AG04450 (cell line): ENCODE measurements at regions of chr10 and their contacts with region 1.

Region 1: GRCh38 chr10:62437696-62438095 is 63.5 kb downstream of the ZNF365 start:
- DNase-seq: no peak
- H3K4me3 ChIP-seq: no peak overlapping the region
- H3K27ac ChIP-seq: no peak overlapping the region
- H3K27me3 ChIP-seq: no peaks in the 10 kb centered on the region
- CTCF ChIP-seq: peak; percentile 76

Region 2: DNA sequence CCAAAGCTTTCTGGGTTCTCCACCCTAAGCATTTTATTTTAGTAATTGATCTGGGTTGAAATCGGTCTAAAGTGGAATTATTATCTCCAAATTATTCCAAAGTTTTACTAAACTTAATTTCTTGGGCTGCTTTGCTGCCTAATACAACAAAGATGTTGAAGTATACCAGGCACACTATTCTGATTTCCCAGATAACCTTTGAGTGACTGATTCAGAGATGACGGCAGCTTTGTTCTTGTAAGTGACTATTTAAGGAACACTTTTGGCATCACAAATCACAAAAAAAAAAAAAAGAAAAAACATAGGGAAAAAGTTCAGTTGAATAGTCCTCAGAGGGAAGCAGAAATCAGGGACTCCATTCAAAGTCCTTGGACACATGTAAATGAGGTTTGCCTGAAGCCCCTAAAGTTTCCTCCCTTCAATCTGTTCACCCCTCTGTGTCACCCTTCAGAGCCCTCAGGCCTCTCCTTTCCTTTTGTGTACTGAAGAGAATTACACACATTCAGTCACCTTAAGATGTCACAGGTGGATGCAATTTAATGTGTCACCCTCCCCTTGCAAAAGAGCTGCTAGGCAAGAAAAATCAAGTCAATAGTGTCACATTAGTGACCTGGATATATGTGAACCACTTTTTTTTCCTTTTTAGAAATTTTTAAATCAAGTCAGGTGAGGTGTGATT is 250.6 kb before region 1 on chr10:
- CTCF ChIA-PET with region 1: no interaction called
- POLR2A ChIA-PET with region 1: no interaction called
- DNase-seq: no peak
- H3K4me3 ChIP-seq: no peak overlapping the region
- H3K27ac ChIP-seq: no peak overlapping the region
- H3K27me3 ChIP-seq: no peaks in the 10 kb centered on the region
- CTCF ChIP-seq: no peak

Region 3: DNA sequence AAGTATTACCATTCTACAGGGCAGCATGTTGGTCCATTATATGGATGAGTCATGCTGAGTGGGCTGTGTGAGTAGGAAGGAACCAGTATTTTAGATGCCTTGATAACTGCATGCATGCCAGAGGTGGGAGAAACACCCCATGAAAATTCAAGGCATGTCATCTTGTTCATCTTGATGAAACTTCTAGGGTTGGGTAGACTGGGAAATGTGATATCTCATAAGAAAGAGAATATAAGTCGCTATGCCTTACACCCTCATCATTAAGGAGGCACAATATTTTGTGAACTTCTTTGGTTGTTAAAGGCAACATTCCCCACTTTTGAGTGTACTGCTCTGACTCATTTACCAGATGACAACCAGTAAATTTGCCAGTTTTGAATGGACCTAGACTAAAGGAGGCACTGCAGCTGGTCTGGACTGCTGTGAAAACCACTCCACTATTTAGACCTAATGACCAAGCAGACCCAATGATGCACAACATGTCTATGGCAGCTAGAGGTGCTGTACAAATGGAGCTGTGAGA is 15.6 kb before region 1 on chr10:
- CTCF ChIA-PET with region 1: interaction called, 32 read pairs
- POLR2A ChIA-PET with region 1: interaction called, 4 read pairs
- DNase-seq: peak; percentile 58
- H3K4me3 ChIP-seq: no peak overlapping the region
- H3K27ac ChIP-seq: no peak overlapping the region
- H3K27me3 ChIP-seq: no peaks in the 10 kb centered on the region
- CTCF ChIP-seq: peak; percentile 28; the same call in 1 of the 2 replicates

Region 4: DNA sequence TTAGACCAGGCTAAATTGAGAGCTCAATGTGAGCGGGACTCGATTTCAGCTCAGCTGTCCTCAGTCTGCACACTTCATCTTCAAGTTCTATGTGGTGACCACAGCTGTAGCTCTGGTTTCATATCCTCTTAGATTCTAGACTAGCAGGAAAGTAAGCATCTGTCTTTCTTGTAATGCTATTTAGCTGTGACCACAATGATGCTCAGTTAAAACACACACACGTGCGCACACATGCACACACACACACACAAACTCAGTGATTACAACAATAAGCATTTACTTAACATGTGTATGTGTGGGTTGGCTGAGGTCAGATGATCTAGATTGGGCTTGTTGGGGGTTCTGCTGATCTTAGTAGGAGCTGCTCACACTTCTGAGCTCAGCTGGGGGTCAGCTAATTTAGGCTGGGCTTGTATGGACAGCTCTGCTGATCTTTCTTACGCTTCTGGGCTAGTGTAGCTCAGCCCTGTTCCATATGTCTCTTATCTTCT is 19.0 kb after region 1 on chr10:
- CTCF ChIA-PET with region 1: interaction called, 48 read pairs
- POLR2A ChIA-PET with region 1: no interaction called
- DNase-seq: no peak
- H3K4me3 ChIP-seq: no peak overlapping the region
- H3K27ac ChIP-seq: no peak overlapping the region
- H3K27me3 ChIP-seq: no peaks in the 10 kb centered on the region
- CTCF ChIP-seq: no peak

Region 5: GRCh38 chr10:62577666-62578291 is 140.1 kb after region 1 on chr10:
- CTCF ChIA-PET with region 1: interaction called, 10 read pairs
- POLR2A ChIA-PET with region 1: no interaction called
- DNase-seq: no peak
- H3K4me3 ChIP-seq: no peak overlapping the region
- H3K27ac ChIP-seq: no peak overlapping the region
- H3K27me3 ChIP-seq: no peaks in the 10 kb centered on the region
- CTCF ChIP-seq: no peak

Region 6: GRCh38 chr10:62618576-62619412 is 181.1 kb after region 1 on chr10:
- CTCF ChIA-PET with region 1: interaction called, 11 read pairs
- POLR2A ChIA-PET with region 1: no interaction called
- DNase-seq: no peak
- H3K4me3 ChIP-seq: no peak overlapping the region
- H3K27ac ChIP-seq: no peak overlapping the region
- H3K27me3 ChIP-seq: no peaks in the 10 kb centered on the region
- CTCF ChIP-seq: no peak

Region 7: GRCh38 chr10:63083904-63084689 is 646.4 kb after region 1 on chr10:
- CTCF ChIA-PET with region 1: interaction called, 13 read pairs
- POLR2A ChIA-PET with region 1: no interaction called
- DNase-seq: peak; percentile 61
- H3K4me3 ChIP-seq: no peak overlapping the region
- H3K27ac ChIP-seq: no peak overlapping the region
- H3K27me3 ChIP-seq: peaks cover 2% of the 10 kb centered on the region
- CTCF ChIP-seq: peak; percentile 70

Region 8: DNA sequence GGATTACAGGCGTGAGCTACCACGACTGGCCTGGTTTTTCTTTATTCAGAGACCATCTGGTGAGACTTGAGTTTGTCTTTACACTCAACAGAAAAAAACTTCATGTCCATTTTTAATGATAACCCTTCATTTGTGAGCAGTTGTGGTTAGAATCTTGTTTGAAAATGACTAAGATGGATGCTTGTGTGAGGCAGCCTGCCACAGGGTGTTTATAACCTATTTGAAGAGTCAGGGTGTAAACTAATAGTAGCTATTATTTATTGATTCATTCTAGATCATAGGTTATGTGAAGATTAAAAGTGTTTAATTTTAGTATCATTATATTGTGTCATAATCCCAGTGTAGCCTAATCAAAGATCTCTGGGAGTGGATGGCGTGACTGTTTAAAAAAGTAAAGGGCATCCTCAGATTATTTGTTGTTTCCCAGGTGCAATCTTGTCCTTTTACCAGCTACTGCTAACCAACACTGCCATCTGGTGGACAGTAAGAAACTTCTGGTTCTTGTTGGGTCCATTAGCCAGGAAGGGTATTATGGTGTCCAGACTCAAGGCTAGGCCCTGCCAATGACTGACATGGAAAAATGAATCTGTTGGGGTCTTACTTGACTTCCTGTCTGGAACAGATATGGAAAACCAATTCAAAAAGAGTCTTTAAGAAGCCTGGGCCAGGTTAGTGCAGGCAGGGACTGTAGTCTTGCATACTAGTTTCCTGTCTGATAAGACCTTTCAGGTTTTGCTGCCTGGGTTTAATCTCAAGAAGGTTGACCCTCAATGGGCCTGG is 720.3 kb after region 1 on chr10:
- CTCF ChIA-PET with region 1: interaction called, 28 read pairs
- POLR2A ChIA-PET with region 1: no interaction called
- DNase-seq: peak; percentile 86
- H3K4me3 ChIP-seq: no peak overlapping the region
- H3K27ac ChIP-seq: no peak overlapping the region
- H3K27me3 ChIP-seq: no peaks in the 10 kb centered on the region
- CTCF ChIP-seq: peak; percentile 79